Panc1 (cell line): ENCODE measurements at regions of chr17 and their contacts with region 1.

Region 1: DNA sequence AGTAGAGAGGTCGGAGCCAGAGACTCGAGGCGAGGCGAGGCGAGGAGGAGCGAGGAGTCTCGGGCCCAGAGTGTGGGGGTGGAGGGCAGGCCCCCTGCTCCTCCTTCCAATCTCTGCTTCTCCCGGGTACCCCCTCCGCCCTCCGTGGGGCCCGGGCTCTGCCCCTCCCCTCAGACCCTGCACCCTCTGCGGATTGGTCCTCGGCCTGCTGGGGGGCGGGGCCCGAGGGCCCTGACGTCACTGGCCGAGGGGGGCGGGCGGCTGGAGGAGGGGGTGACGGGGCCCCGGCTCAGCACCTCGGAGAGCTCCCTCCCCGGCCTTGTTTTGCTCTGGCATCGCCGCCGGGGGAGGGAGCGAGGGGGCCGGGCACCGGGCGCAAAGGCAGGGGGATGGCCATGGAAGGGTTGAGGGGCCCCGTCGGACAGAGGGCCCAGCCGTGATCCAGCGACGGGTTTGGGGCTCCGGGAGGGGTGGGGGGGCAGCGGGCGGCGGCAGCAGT is at the start of gene RUNDC3A:
- DNase-seq: no peak
- ATAC-seq: peak; percentile 90
- H3K4me3 ChIP-seq: peak within 1 kb of the TSS; percentile 37 to 47
- H3K27ac ChIP-seq: no peak within 1 kb of the TSS
- H3K4me1 ChIP-seq: peaks cover 4% of the 10 kb centered on the region
- H3K27me3 ChIP-seq: no peaks in the 10 kb centered on the region
- CTCF ChIP-seq: no peak
- total RNA-seq, gene RUNDC3A: 3.6 TPM

Region 2: GRCh38 chr17:44235583-44235936 is 72.8 kb before region 1 on chr17:
- CTCF ChIA-PET with region 1: no interaction called
- POLR2A ChIA-PET with region 1: no interaction called
- in situ Hi-C with region 1: no loop called
- intact Hi-C with region 1: no loop called
- DNase-seq: peak; percentile 45
- ATAC-seq: peak; percentile 88
- H3K4me3 ChIP-seq: no peak overlapping the region
- H3K27ac ChIP-seq: no peak overlapping the region
- H3K4me1 ChIP-seq: no peaks in the 10 kb centered on the region
- H3K27me3 ChIP-seq: no peaks in the 10 kb centered on the region
- CTCF ChIP-seq: no peak

Region 3: GRCh38 chr17:44253006-44253405 is 55.4 kb before region 1 on chr17:
- CTCF ChIA-PET with region 1: interaction called, 12 read pairs
- POLR2A ChIA-PET with region 1: no interaction called
- in situ Hi-C with region 1: no loop called
- intact Hi-C with region 1: no loop called
- DNase-seq: no peak
- ATAC-seq: no peak
- H3K4me3 ChIP-seq: no peak overlapping the region
- H3K27ac ChIP-seq: no peak overlapping the region
- H3K4me1 ChIP-seq: no peaks in the 10 kb centered on the region
- H3K27me3 ChIP-seq: no peaks in the 10 kb centered on the region
- CTCF ChIP-seq: no peak

Region 4: DNA sequence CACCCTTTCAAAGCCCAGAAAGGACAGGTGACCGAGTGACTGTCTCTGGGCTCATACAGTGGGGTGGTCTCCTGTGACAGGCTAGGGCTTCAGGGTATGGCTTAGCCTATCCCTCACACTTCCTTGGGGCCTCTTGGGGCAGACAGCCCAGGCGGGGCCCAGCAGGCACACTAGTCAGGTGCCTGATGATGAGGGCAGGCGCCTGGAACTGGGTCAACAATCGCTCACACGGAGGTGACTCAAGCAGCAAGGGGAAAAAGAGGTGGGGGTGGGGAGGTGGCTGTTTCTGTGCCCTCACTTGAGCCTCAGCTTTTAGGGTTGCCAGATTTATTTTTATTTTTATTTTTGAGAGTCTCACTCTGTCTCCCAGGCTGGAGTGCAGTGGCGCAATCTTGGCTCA is 30.3 kb after region 1 on chr17:
- CTCF ChIA-PET with region 1: no interaction called
- POLR2A ChIA-PET with region 1: no interaction called
- in situ Hi-C with region 1: no loop called
- intact Hi-C with region 1: no loop called
- DNase-seq: no peak
- ATAC-seq: peak; percentile 64; the same call in 1 of the 2 replicates
- H3K4me3 ChIP-seq: no peak overlapping the region
- H3K27ac ChIP-seq: no peak overlapping the region
- H3K4me1 ChIP-seq: no peaks in the 10 kb centered on the region
- H3K27me3 ChIP-seq: no peaks in the 10 kb centered on the region
- CTCF ChIP-seq: no peak

Region 5: DNA sequence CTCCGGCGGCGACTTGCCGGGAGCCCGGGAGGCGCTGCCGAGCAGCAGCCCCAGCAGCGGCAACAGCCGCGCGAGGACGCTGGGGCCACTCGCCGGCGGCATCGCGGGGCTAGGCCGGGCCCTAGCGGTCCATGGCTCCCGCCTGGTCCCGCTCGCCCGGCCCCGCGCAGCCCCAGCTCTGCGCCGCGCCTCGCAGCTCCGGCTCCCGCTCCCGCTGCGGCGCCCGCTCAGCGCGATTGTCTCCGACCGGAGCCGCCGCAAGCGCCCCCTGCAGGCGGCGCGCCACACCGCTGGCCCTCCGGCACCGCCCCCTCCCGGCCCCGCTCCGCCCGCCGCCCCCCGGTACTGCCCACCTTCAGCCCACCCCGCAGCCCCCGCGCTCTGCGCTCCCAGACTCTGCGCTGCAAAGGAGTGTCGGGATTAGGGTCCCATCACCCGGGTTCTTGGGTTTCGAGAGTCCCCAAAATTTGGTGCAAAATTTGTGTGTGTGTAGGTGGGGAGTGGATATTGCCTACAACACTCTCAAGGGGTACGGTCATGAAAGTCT is 55.3 kb after region 1 on chr17 and contains the start of gene FAM171A2:
- CTCF ChIA-PET with region 1: no interaction called
- POLR2A ChIA-PET with region 1: interaction called, 11 read pairs
- in situ Hi-C with region 1: no loop called
- intact Hi-C with region 1: no loop called
- DNase-seq: no peak
- ATAC-seq: peak; percentile 88
- H3K4me3 ChIP-seq: peak within 1 kb of the TSS; percentile 58 to 62
- H3K27ac ChIP-seq: no peak within 1 kb of the TSS
- H3K4me1 ChIP-seq: peaks cover 6% of the 10 kb centered on the region; the same call in 1 of the 2 replicates
- H3K27me3 ChIP-seq: no peaks in the 10 kb centered on the region
- CTCF ChIP-seq: peak; percentile 94
- total RNA-seq, gene FAM171A2: 7.6 TPM